ENCODE measurements at regions of chr1 and their contacts with region 1.

Region 1: DNA sequence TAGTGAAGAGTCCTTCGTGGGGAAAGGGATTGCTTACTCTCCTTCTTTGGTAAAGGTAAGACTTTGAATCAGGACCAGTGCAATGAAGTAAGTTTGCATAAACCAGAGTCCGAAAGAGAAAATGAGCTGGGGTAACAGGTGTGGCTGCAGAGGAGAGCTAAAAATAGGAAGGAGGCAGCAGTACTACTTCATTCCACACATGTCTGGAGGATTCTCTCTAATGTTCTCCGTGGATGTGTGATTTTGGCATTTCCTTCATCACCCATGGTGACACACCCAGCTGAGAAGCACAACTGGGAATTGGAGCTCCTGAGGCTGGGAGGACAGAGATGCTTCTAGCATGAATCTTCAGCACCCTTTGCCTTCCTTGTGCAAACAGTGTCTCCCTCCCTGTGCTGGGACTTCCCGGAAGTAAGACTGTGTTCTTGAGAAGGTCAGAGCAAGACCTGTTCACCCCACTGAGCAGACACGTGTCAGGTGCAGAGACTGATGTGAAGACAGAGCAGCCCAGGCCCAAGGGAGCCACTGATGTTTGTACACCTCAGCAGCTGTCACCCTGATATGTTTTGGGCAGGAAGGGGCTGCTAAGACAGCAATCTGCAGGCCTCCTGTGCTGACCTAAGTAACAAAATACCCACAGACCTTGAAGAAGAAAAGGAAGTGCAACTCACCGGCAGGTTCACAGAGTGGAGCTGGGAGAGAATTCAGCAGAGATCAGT is 13.3 kb downstream of the FCRL1 start:
- DNase-seq: no peak
- ATAC-seq: no peak
- H3K4me3 ChIP-seq: no peak overlapping the region
- H3K27ac ChIP-seq: no peak overlapping the region
- H3K4me1 ChIP-seq: no peaks in the 10 kb centered on the region
- H3K27me3 ChIP-seq: no peaks in the 10 kb centered on the region
- CTCF ChIP-seq: no peak
- EP300 ChIP-seq: no peak
- POLR2A ChIP-seq: no peak
- RAD21 ChIP-seq: no peak

Region 2: DNA sequence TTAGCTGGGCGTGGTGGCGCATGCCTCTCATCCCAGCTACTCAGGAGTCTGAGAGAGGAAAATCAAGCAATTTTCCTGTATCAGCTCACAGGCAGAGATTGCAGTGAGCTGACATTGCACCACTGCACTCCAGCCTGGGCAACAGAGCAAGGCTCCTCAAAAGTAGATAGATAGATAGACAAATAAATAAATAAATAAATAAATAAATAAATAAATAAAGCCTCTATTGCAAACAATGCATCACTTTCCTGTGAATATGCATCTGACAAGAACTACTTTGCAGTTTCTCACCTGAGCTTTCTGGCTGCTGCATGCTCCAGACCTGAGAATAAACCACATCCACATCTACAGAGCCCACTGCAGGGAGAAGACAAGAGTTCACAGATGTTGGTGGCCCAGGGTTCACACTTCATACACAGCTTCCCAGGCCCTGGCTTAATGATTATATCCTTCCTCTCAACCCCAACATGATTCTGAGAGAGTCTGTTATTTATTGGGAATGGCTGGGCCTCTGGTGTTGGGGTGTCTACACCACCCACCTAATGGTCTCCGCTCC is 58.2 kb before region 1 on chr1:
- CTCF ChIA-PET with region 1: no interaction called
- POLR2A ChIA-PET with region 1: no interaction called
- in situ Hi-C with region 1: loop called (anchors 10 kb)
- intact Hi-C with region 1: no loop called
- DNase-seq: no peak
- ATAC-seq: no peak
- H3K4me3 ChIP-seq: no peak overlapping the region
- H3K27ac ChIP-seq: no peak overlapping the region
- H3K4me1 ChIP-seq: no peaks in the 10 kb centered on the region
- H3K27me3 ChIP-seq: no peaks in the 10 kb centered on the region
- CTCF ChIP-seq: no peak
- EP300 ChIP-seq: no peak
- POLR2A ChIP-seq: no peak
- RAD21 ChIP-seq: no peak

Measured in HepG2 (cell line).